AG04449 (cell line): ENCODE measurements at regions of chr15 and their contacts with region 1.

Region 1: DNA sequence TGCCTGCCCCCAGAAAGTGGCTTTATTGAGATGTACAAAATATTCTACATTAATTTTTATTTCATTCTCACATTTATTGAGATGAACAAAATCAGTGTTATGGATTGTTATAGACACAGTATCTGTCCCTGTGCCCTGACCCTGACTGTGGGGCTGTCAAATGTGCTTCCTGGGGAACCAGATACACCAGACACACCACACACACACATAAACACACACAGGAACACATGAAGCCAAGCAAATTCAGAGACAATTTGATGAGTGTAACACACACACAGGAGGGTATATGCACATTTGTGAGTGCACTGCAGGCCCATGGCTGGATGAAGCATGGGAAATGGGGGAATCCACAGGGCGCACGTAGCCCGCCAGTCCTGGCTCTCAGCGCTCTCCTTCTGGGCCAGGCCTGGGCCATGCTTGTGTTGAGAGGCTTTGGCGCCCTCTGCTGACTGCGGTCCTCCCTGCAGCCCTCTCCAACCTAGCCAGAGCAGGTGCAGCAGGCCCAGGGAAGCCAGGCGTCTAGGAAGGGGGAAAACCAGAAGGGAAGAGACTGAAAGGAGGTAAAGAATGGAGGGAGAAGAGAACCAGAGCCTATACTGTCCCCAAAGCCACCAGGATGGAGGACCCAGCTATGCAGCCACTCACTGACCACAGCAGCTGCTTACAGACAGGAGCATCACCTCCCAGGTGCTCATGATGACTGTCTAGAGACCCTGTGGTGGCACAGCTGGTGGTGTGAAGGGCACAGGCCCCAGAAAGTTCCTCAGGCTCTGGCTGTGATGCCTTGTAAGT is 18.0 kb upstream of the LOXL1 start:
- DNase-seq: no peak
- H3K4me3 ChIP-seq: no peak overlapping the region
- CTCF ChIP-seq: peak; percentile 98

Region 2: GRCh38 chr15:73879420-73879819 is 28.8 kb before region 1 on chr15:
- CTCF ChIA-PET with region 1: interaction called, 168 read pairs
- POLR2A ChIA-PET with region 1: no interaction called
- DNase-seq: no peak
- H3K4me3 ChIP-seq: no peak overlapping the region
- CTCF ChIP-seq: no peak

Region 3: DNA sequence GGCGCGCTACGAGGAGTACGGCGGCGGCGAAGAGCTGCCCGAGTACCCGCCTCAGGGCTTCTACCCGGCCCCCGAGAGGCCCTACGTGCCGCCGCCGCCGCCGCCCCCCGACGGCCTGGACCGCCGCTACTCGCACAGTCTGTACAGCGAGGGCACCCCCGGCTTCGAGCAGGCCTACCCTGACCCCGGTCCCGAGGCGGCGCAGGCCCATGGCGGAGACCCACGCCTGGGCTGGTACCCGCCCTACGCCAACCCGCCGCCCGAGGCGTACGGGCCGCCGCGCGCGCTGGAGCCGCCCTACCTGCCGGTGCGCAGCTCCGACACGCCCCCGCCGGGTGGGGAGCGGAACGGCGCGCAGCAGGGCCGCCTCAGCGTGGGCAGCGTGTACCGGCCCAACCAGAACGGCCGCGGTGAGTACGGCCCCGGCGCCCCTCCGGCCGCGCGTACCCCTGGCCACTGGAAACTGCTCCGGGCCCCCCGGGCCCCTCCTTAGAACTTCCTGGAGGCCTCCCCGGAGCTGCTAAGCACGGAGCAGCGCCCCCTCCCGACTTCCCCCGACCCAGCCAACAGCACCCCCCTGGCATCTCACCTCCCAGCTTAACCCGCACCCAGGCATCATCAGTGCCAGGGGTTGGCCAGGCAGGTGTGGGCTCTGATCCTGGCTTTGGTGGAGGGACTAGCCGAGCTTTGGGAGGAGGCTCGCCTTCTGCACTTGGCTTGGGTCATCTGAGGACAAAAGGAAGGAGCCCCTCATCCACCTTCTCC is 19.4 kb after region 1 on chr15:
- CTCF ChIA-PET with region 1: interaction called, 533 read pairs
- POLR2A ChIA-PET with region 1: interaction called, 3 read pairs
- DNase-seq: no peak
- H3K4me3 ChIP-seq: peak overlapping the region; percentile 80
- CTCF ChIP-seq: peak; percentile 62